Activated T-helper 2 cell treated with anti-CD3 and anti-CD28 coated beads, Interferon-gamma antibody, Interleukin-2, Interleukin-4, amounts not matched to agents 10 μg/mL and 5 μg/mL and 100 μg/mL, durations not matched to agents 14 hours and 24 hours and 36 hours (primary cell): ENCODE measurements at regions of chr11 and their contacts with region 1.

Region 1: DNA sequence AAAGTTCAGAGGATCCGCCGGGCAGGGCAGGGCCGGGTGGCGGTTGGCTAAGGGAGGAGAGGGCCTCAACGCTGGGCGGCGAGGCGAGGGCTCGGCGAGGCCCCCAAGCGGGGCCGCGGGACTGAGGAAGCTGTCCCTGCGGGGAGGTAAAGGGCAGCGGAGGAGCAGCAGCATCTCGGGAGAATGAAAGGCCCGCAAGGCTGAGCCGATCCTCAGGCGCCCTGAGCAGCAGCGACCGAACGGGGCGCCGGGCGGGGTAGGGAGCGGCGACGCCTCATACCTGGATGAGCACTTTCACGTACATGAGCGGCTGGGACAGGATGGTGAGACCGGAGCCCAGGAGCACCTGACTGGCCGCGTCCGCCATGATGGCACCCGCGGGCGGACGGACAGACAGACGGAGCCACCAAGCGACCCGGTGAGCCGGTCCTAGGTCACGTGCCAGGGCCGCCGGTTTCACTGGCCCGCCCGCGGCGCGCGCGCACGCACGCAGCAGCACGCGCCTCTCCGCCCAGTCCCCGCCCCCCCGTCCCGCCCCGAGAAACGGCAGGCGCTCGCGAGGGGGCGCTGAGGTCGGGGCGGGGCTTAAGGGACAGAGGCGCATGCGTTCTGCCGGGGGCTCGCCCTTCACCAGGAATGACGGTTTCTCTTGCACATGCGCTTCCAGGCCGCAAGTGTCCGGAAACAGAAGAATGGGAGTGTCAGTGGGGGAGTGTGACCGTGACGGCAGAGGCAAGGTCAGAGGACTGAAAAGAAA is at the start of gene MTCH2:
- DNase-seq: peak; percentile 95
- H3K4me3 Mint-ChIP-seq: peak within 1 kb of the TSS; percentile 99
- H3K27ac Mint-ChIP-seq: peak within 1 kb of the TSS; percentile 95
- H3K4me1 Mint-ChIP-seq: peaks cover 27% of the 10 kb centered on the region
- H3K27me3 Mint-ChIP-seq: no peaks in the 10 kb centered on the region
- total RNA-seq, gene MTCH2: 124 and 131 TPM in 2 replicates

Region 2: DNA sequence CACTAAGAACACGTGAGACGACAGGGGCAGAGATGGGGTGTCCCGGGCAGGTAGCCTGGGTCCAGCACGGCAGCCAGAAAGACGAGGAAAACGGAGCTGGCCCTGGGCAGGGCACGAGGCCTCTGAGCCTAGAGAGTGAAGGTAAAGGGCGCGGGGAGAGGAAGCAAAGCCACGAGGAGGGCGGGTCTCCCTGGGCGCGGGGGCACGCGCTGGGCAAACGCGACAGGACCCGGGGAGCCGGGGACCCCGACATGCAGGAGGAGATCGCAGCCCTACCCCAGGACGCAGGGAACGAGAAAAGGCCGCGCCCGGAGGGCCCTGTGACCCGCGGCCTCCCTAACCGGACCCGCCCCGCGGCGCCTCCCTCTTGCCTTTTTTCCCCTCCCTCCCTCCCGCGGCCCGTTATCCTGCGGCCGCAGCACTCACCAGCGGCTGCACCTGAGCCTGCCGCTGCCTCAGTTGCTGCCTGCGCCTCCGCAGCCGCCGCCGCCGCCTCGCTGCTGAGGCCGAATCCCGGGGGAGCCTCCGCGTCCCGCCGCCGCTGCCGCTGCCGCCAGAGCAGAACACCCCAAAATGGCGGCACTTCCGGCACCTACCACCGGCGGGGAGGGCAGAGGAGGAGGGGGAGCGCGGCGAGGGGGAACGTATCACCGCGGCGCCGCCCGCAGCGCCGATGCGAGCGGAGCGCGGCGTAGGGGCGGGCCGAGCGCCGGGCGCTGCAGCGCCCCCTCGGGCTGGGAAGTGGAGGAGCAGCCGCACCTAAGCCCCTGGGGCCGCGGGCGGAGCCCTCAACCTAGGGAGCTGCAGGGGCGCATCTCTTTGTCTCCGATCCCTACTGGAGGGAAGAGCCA is 89.5 kb before region 1 on chr11 and contains the start of gene CELF1:
- intact Hi-C with region 1: loop called (anchors 1 kb)
- DNase-seq: peak; percentile 92
- H3K4me3 Mint-ChIP-seq: peak within 1 kb of the TSS; percentile 100
- H3K27ac Mint-ChIP-seq: peak within 1 kb of the TSS; percentile 95
- H3K4me1 Mint-ChIP-seq: peaks cover 31% of the 10 kb centered on the region
- H3K27me3 Mint-ChIP-seq: no peaks in the 10 kb centered on the region
- total RNA-seq, gene CELF1: 129 and 132 TPM in 2 replicates

Region 3: GRCh38 chr11:47578524-47579460 is 63.5 kb before region 1 on chr11 and contains the starts of genes KBTBD4 and NDUFS3:
- intact Hi-C with region 1: loop called (anchors 1 kb)
- DNase-seq: peak; percentile 88
- H3K4me3 Mint-ChIP-seq: peak within 1 kb of the TSS; percentile 100
- H3K27ac Mint-ChIP-seq: peak within 1 kb of the TSS; percentile 98
- H3K4me1 Mint-ChIP-seq: peaks cover 25% of the 10 kb centered on the region
- H3K27me3 Mint-ChIP-seq: no peaks in the 10 kb centered on the region
- total RNA-seq, gene KBTBD4: 14.2 and 15.3 TPM in 2 replicates
- total RNA-seq, gene NDUFS3: 132 and 142 TPM in 2 replicates

Region 4: GRCh38 chr11:47715082-47715669 is 72.9 kb after region 1 on chr11 and contains the start of gene AGBL2:
- intact Hi-C with region 1: loop called (anchors 1 kb)
- DNase-seq: peak; percentile 83
- H3K4me3 Mint-ChIP-seq: peak within 1 kb of the TSS; percentile 92
- H3K27ac Mint-ChIP-seq: peak within 1 kb of the TSS; percentile 95
- H3K4me1 Mint-ChIP-seq: peaks cover 21% of the 10 kb centered on the region
- H3K27me3 Mint-ChIP-seq: no peaks in the 10 kb centered on the region
- total RNA-seq, gene AGBL2: 3.6 and 5.1 TPM in 2 replicates

Region 5: DNA sequence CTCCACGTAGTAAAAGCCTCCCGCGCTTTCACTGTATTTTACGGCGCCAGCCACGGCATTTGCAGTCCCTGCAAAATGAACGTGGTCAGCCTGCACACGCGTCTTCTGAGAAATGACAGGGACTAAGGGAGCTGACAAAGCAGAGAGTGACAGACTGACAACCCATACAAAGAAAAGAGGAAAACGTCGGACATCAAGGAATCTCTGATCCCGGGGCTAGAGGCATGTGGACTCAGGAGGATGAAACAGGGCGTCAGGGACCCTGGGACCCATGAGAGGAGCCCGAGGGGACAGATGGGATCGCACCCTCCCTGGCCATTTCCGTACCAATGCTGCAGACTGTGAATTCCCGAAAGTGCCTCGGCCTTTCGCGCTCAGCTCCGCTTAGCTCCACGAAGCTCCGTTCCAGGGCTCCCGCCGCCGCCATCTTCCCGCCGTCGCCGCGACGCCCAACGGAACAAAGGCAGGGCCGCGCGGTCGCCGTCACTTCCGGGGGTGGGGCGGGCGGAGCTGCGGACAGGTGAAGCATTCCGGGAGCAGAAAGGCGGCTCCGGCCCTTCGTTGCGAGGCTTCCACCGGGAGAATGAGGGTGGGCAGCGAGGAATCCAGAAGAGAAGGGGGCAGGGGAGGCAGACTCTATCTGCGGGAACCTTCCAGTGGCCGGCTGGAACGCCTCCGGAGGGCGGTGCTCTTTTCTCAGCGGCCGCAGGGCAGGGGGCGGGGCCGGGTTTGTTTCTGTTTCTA is 205.8 kb after region 1 on chr11 and contains the start of gene NUP160:
- intact Hi-C with region 1: loop called (anchors 2 kb)
- DNase-seq: peak; percentile 85
- H3K4me3 Mint-ChIP-seq: peak within 1 kb of the TSS; percentile 97
- H3K27ac Mint-ChIP-seq: peak within 1 kb of the TSS; percentile 98
- H3K4me1 Mint-ChIP-seq: peaks cover 33% of the 10 kb centered on the region
- H3K27me3 Mint-ChIP-seq: no peaks in the 10 kb centered on the region
- total RNA-seq, gene NUP160: 81.2 and 84.7 TPM in 2 replicates